Activated CD4-positive, alpha-beta T cell treated with anti-CD3 and anti-CD28 coated beads for 36 hours (primary cell): ENCODE measurements at regions of chr6 and their contacts with region 1.

Region 1: GRCh38 chr6:41779793-41780545 is at the start of gene FRS3:
- DNase-seq: peak; percentile 100
- ATAC-seq: peak; percentile 98
- H3K4me3 Mint-ChIP-seq: peak within 1 kb of the TSS; percentile 85
- H3K27ac Mint-ChIP-seq: peak within 1 kb of the TSS; percentile 75
- H3K4me1 Mint-ChIP-seq: peaks cover 18% of the 10 kb centered on the region
- H3K27me3 Mint-ChIP-seq: peaks cover 7% of the 10 kb centered on the region
- total RNA-seq, gene FRS3: 4.8 to 5.6 TPM

Region 2: DNA sequence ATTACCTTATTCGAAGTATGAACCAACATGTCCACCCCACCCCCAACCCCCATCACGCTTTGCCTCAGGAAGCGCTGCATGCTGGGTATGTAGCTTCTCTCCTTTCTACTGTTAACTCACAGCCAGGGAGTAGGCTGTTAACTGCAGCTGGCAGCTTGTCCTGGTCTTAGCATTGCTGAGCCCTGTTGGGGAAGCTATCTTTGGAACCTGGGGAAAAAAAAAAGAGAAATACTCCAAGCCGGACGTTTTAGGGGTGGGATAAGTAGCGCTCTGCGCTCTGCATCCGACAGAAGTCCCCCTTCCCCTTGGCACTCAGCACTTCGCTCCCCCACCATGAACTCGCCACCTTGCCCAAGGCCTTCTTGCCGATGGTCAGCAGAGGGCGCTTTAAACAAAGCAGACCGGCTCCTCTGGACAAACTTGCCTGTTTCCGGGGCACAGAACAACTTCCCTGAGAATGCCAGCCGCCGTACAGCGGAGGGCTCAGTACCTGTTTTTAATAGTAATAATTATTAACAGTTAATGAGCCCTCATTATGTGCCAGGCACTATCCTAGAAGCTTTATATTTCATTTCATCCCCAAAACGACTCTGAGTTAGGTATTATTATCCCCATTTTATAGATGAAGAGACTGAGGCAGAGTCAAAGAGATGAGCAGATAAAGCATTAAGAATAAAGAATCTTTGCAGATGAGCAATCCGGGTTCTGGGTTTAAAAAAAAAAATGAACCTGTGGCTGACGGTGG is 176.9 kb before region 1 on chr6:
- CTCF ChIA-PET with region 1: interaction called, 4 read pairs
- POLR2A ChIA-PET with region 1: no interaction called
- intact Hi-C with region 1: loop called (anchors 1 to 5 kb)
- DNase-seq: peak; percentile 86
- ATAC-seq: peak; percentile 93
- H3K4me3 Mint-ChIP-seq: no peak overlapping the region
- H3K27ac Mint-ChIP-seq: no peak overlapping the region
- H3K4me1 Mint-ChIP-seq: peaks cover 3% of the 10 kb centered on the region
- H3K27me3 Mint-ChIP-seq: no peaks in the 10 kb centered on the region

Region 3: DNA sequence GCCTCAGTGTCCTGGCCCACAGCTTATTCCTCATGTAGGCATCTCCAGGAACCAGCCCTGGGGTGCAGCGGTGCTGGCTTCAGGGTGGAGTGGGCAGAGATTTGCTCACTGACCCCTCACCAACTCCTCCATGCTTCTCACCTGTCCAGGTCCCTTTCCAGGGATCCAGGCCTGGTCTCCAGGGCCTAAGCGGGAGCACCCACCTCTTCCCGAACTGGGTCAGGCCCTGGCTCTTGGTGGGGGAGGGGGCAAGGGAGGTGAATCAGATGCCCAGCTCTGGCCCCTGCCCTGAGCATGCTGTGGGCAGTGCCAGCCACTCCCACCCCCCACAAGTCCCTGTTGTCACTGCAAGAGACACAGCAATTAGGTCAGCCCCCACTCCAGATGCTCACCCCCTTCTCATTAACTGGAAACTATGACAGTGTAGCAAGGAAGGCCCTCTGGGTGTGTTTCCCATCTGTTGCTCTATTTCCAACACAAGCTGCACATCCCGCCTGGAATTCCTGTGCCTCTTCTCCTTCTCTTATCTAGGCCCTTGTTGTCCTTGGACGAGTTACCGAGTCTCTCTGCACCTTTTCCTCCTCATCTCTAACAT is 104.7 kb before region 1 on chr6:
- CTCF ChIA-PET with region 1: no interaction called
- POLR2A ChIA-PET with region 1: no interaction called
- intact Hi-C with region 1: no loop called
- DNase-seq: no peak
- ATAC-seq: no peak
- H3K4me3 Mint-ChIP-seq: no peak overlapping the region
- H3K27ac Mint-ChIP-seq: no peak overlapping the region
- H3K4me1 Mint-ChIP-seq: no peaks in the 10 kb centered on the region
- H3K27me3 Mint-ChIP-seq: peaks cover 9% of the 10 kb centered on the region

Region 4: GRCh38 chr6:41735427-41736356 is 44.3 kb before region 1 on chr6 and contains the start of gene TFEB:
- CTCF ChIA-PET with region 1: interaction called, 3 read pairs
- POLR2A ChIA-PET with region 1: no interaction called
- intact Hi-C with region 1: loop called in 1 of 2 experiments (anchors 1 kb)
- DNase-seq: peak; percentile 97
- ATAC-seq: peak; percentile 76
- H3K4me3 Mint-ChIP-seq: peak within 1 kb of the TSS; percentile 74
- H3K27ac Mint-ChIP-seq: peak within 1 kb of the TSS; percentile 42
- H3K4me1 Mint-ChIP-seq: peaks cover 29% of the 10 kb centered on the region
- H3K27me3 Mint-ChIP-seq: no peaks in the 10 kb centered on the region
- total RNA-seq, gene TFEB: 8.5 to 9.2 TPM

Region 5: GRCh38 chr6:42050266-42051032 is 270.5 kb after region 1 on chr6 and contains the start of gene TAF8:
- CTCF ChIA-PET with region 1: interaction called, 63 read pairs
- POLR2A ChIA-PET with region 1: no interaction called
- intact Hi-C with region 1: loop called (anchors 1 kb)
- DNase-seq: peak; percentile 94
- ATAC-seq: peak; percentile 76
- H3K4me3 Mint-ChIP-seq: peak within 1 kb of the TSS; percentile 88
- H3K27ac Mint-ChIP-seq: peak within 1 kb of the TSS; percentile 96
- H3K4me1 Mint-ChIP-seq: peaks cover 64% of the 10 kb centered on the region
- H3K27me3 Mint-ChIP-seq: no peaks in the 10 kb centered on the region
- total RNA-seq, gene TAF8: 52.3 to 53.1 TPM

Region 6: GRCh38 chr6:42166444-42167141 is 386.6 kb after region 1 on chr6:
- CTCF ChIA-PET with region 1: interaction called, 4 read pairs
- POLR2A ChIA-PET with region 1: no interaction called
- intact Hi-C with region 1: loop called (anchors 1 to 2 kb)
- DNase-seq: peak; percentile 89
- ATAC-seq: peak; percentile 97
- H3K4me3 Mint-ChIP-seq: no peak overlapping the region
- H3K27ac Mint-ChIP-seq: no peak overlapping the region
- H3K4me1 Mint-ChIP-seq: peaks cover 2% of the 10 kb centered on the region
- H3K27me3 Mint-ChIP-seq: peaks cover 2% of the 10 kb centered on the region